ENCODE measurements at regions of chr17 and their contacts with region 1.

Region 1: GRCh38 chr17:43483674-43484372 is at the start of gene DHX8:
- DNase-seq: peak; percentile 99 to 100
- ATAC-seq: peak; percentile 97 to 99
- H3K4me3 ChIP-seq: peak within 1 kb of the TSS; percentile 62
- H3K27ac ChIP-seq: peak within 1 kb of the TSS; percentile 81 to 90
- H3K4me1 ChIP-seq: peaks cover 30% of the 10 kb centered on the region
- CTCF ChIP-seq: peak; percentile 100
- EP300 ChIP-seq: no peak
- POLR2A ChIP-seq: peak; percentile 88
- RAD21 ChIP-seq: peak; percentile 100
- polyA plus RNA-seq, gene DHX8: 66.0 and 70.4 TPM in 2 replicates

Region 2: GRCh38 chr17:43377056-43377810 is 106.6 kb before region 1 on chr17:
- CTCF ChIA-PET with region 1: interaction called, 74 read pairs
- POLR2A ChIA-PET with region 1: no interaction called
- DNase-seq: no peak
- ATAC-seq: peak; percentile 27 to 40; a peak in 4 of 6 replicates
- H3K4me3 ChIP-seq: no peak overlapping the region
- H3K27ac ChIP-seq: no peak overlapping the region
- H3K4me1 ChIP-seq: no peaks in the 10 kb centered on the region
- CTCF ChIP-seq: no peak
- EP300 ChIP-seq: no peak
- POLR2A ChIP-seq: no peak
- RAD21 ChIP-seq: no peak

Region 3: DNA sequence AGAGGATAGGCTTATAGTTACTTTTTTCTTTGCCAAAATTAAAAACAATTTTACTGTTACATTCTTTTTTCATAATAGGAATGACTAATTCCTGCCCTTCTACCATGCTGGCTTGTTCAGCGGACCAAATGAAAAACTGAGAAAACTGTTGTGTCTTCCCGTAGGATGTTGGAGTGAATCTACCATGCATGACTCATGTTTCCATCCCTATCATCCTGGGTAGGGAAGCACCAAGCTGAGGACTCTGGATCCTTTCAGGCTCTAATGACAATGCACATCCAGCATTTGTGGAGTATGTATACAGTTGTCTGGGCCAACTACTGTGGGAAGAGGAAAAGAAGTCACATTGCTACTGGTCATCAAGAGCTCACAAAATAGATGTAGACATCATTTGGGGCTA is 41.1 kb before region 1 on chr17:
- CTCF ChIA-PET with region 1: interaction called, 2,036 read pairs
- POLR2A ChIA-PET with region 1: interaction called, 4 read pairs
- DNase-seq: peak in 1 of 2 experiments; percentile 61
- ATAC-seq: peak; percentile 74 to 77; a peak in 5 of 6 replicates
- H3K4me3 ChIP-seq: no peak overlapping the region
- H3K27ac ChIP-seq: peak overlapping the region; percentile 56 to 59; a peak in 5 of 6 replicates
- H3K4me1 ChIP-seq: peaks cover 36% of the 10 kb centered on the region
- CTCF ChIP-seq: no peak
- EP300 ChIP-seq: no peak
- POLR2A ChIP-seq: no peak
- RAD21 ChIP-seq: no peak

Region 4: GRCh38 chr17:43467981-43468581 is 15.7 kb before region 1 on chr17:
- CTCF ChIA-PET with region 1: interaction called, 175 read pairs
- POLR2A ChIA-PET with region 1: interaction called, 4 read pairs
- DNase-seq: no peak
- ATAC-seq: no peak
- H3K4me3 ChIP-seq: no peak overlapping the region
- H3K27ac ChIP-seq: peak overlapping the region; percentile 44 to 65; a peak in 4 of 6 replicates
- H3K4me1 ChIP-seq: peaks cover 31% of the 10 kb centered on the region
- CTCF ChIP-seq: no peak
- EP300 ChIP-seq: no peak
- POLR2A ChIP-seq: no peak
- RAD21 ChIP-seq: no peak

Region 5: GRCh38 chr17:43536236-43536992 is 52.6 kb after region 1 on chr17:
- CTCF ChIA-PET with region 1: interaction called, 44 read pairs
- POLR2A ChIA-PET with region 1: no interaction called
- DNase-seq: no peak
- ATAC-seq: peak; percentile 26 to 44; a peak in 4 of 6 replicates
- H3K4me3 ChIP-seq: no peak overlapping the region
- H3K27ac ChIP-seq: peak overlapping the region; percentile 29 to 59
- H3K4me1 ChIP-seq: peaks cover 30% of the 10 kb centered on the region
- CTCF ChIP-seq: no peak
- EP300 ChIP-seq: no peak
- POLR2A ChIP-seq: no peak
- RAD21 ChIP-seq: no peak

Measured in A549 (cell line).